Calu3 (cell line): ENCODE measurements at regions of chr3 and their contacts with region 1.

Region 1: GRCh38 chr3:131381444-131382291 is at the start of gene NUDT16:
- DNase-seq: peak; percentile 100
- H3K4me3 Mint-ChIP-seq: peak within 1 kb of the TSS; percentile 84
- H3K27ac Mint-ChIP-seq: peak within 1 kb of the TSS; percentile 78
- H3K4me1 Mint-ChIP-seq: peaks cover 23% of the 10 kb centered on the region
- H3K27me3 Mint-ChIP-seq: no peaks in the 10 kb centered on the region
- CTCF ChIP-seq: no peak
- total RNA-seq, gene NUDT16: 42.0 and 43.3 TPM in 2 replicates

Region 2: GRCh38 chr3:131361464-131362421 is 19.9 kb before region 1 on chr3:
- CTCF ChIA-PET with region 1: interaction called, 3 read pairs
- intact Hi-C with region 1: loop called (anchors 2 kb)
- DNase-seq: peak; percentile 100
- H3K4me3 Mint-ChIP-seq: peak overlapping the region; percentile 71
- H3K27ac Mint-ChIP-seq: peak overlapping the region; percentile 77
- H3K4me1 Mint-ChIP-seq: peaks cover 34% of the 10 kb centered on the region
- H3K27me3 Mint-ChIP-seq: no peaks in the 10 kb centered on the region
- CTCF ChIP-seq: no peak